HEK293 (cell line): ENCODE measurements at regions of chr2 and their contacts with region 1.

Region 1: GRCh38 chr2:42964439-42965083 is 172.2 kb upstream of the HAAO start:
- H3K4me3 ChIP-seq: no peak overlapping the region
- H3K27ac ChIP-seq: no peak overlapping the region
- H3K4me1 ChIP-seq: no peaks in the 10 kb centered on the region
- CTCF ChIP-seq: no peak

Region 2: DNA sequence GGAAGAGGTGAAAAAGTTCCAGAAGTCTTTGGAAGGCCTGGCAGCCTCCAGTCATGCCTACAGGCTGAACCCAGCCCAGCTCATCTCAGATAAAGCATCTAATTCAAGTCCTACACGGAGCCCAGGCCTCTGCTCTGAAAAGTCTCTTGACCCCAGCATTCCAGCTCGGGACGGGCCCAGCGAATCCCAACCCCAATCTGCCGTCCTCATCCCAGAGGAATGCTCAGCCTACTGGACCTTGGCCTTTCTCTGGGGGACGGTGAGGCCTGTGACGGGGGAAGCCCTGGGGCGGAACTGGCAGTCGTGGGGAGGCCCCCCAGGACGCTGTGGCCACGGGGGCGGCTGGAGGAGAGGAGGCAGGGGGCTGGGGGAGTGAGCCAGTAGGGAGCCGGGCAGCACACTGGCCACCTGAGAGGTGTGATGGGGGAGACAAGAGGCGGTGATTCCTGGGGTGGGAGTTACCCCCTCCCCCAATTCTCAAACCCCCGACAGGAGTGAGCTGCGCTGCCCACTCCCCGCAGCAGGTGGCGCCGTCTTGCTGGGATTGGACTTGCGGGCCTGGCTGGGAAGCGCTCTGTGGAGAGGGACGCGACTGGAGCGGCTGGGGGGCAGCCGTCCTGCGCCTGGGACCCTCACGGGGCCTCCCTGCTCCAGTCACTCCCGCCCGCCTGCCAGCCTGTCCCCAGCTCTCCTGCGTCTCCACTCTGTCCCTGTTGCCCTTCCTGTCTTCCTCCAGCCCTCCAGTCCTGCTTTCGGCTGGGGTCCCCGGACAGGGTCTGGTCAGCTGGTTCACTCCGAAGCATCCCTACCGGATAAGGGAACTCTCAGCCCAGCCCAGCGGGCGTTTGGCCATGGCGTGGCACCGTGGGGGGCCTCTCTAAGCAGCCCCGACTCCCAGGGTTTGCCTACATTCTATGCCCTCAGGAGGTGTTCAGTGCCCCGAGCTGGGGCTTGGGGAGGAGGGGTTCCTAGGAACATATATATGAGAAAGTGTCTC is 10.5 kb after region 1 on chr2:
- CTCF ChIA-PET with region 1: interaction called, 18 read pairs
- POLR2A ChIA-PET with region 1: interaction called, 8 read pairs
- H3K4me3 ChIP-seq: peak overlapping the region; percentile 20; the same call in 1 of the 2 replicates
- H3K27ac ChIP-seq: no peak overlapping the region; the same call in 1 of the 2 replicates
- H3K4me1 ChIP-seq: no peaks in the 10 kb centered on the region
- CTCF ChIP-seq: peak; percentile 93